ENCODE measurements at regions of chr15 and their contacts with region 1.

Region 1: DNA sequence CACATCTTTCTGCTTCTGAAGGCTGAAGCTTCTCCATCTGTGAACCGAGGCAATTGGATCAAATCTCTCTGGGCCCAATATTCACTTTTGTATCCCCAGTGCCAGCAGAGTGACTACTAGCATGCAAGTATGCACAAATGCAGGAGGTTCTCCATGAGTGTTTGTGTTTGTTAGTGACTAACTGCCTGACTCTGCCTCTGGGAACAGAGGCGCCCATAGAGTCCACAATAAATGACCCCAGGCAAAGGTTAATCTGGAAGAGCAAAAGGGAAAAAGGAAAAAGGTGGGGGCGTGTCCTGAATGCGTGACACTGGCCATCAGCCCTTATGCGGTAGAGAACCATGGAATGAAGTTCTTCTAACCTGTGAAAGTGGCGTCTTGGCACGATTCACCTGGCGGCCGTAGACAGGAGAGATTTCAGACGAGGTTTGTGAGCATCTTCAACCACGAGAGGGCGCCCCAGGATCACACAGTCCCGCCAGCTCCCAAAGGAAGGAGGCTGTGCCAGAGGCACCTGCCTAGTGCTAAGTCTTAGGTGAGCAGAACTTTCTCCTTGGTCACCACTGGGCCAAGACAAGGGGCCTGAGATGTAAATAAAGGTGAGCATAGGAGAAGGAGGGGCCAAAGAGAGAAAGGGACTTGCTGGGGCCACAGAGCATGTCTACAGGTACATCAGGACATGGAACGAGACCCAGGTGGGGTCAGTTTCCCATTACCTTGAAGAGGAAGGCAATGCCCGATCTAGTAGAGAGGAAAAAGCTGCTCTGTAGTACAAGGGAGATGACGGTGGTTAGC is 44.2 kb downstream of the RBPMS2 start:
- DNase-seq: peak; percentile 74 to 86 (median 78)
- H3K4me3 ChIP-seq: no peak overlapping the region
- H3K4me3 Mint-ChIP-seq: no peak overlapping the region
- H3K27ac ChIP-seq: no peak overlapping the region
- H3K27ac Mint-ChIP-seq: peak overlapping the region in 1 of 8 donors; percentile 64
- H3K4me1 ChIP-seq: peaks cover 7% of the 10 kb centered on the region
- H3K4me1 Mint-ChIP-seq: peaks cover 7 to 10% (median 9%) of the 10 kb centered on the region in 3 donors
- H3K27me3 ChIP-seq: no peaks in the 10 kb centered on the region
- H3K27me3 Mint-ChIP-seq: peaks cover 4 to 5% of the 10 kb centered on the region in 2 donors

Region 2: GRCh38 chr15:64430000-64430735 is 301.0 kb before region 1 on chr15:
- CTCF ChIA-PET with region 1: interaction called, 12 read pairs
- POLR2A ChIA-PET with region 1: no interaction called
- DNase-seq: peak; percentile 1 to 82 (median 72)
- H3K4me3 ChIP-seq: peak overlapping the region; percentile 38
- H3K4me3 Mint-ChIP-seq: peak overlapping the region; percentile 17 to 86 (median 79)
- H3K27ac ChIP-seq: no peak overlapping the region
- H3K27ac Mint-ChIP-seq: peak overlapping the region; percentile 76 to 97 (median 92)
- H3K4me1 ChIP-seq: peaks cover 48% of the 10 kb centered on the region
- H3K4me1 Mint-ChIP-seq: peaks cover 37 to 47% (median 40%) of the 10 kb centered on the region in 3 donors
- H3K27me3 ChIP-seq: no peaks in the 10 kb centered on the region
- H3K27me3 Mint-ChIP-seq: no peaks in the 10 kb centered on the region

Region 3: DNA sequence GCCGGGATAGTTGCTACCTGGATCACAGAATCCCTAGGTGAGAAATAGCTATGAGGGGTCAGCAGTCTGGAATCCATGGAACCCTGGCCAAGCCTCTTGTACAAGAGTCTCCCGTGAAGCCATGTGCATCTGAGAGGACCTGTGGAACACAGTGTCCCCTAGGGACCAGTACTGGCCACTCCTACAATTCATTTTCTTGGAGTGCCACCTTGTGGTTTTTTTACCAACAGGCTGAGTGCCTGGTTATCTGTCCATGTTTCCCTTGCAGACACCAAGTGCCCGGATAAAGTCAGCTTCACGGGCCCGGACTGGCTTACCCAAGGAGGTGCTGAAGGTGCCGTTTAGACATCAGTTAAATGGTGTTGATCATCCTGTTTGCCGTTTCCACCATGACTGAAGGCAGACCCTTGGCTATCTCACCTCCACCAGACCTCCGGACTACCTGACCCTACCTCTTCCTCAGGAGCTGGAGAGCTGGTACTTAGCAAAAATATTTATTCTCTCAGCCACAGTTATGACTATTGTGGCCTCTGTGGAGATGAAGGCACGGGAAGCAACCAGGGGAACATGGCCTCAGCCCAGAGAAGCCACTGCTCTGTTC is 49.7 kb before region 1 on chr15:
- CTCF ChIA-PET with region 1: interaction called, 146 read pairs
- POLR2A ChIA-PET with region 1: no interaction called
- DNase-seq: no peak
- H3K4me3 ChIP-seq: no peak overlapping the region
- H3K4me3 Mint-ChIP-seq: no peak overlapping the region
- H3K27ac ChIP-seq: no peak overlapping the region
- H3K27ac Mint-ChIP-seq: peak overlapping the region in 4 of 8 donors; percentile 37 to 68 (median 59)
- H3K4me1 ChIP-seq: no peaks in the 10 kb centered on the region
- H3K4me1 Mint-ChIP-seq: peaks cover 0 to 3% (median 0%) of the 10 kb centered on the region in 3 donors
- H3K27me3 ChIP-seq: no peaks in the 10 kb centered on the region
- H3K27me3 Mint-ChIP-seq: no peaks in the 10 kb centered on the region

Region 4: GRCh38 chr15:64717735-64718495 is 13.3 kb before region 1 on chr15:
- CTCF ChIA-PET with region 1: interaction called, 23 read pairs
- POLR2A ChIA-PET with region 1: no interaction called
- DNase-seq: peak in 1 of 5 donors; percentile 27
- H3K4me3 ChIP-seq: no peak overlapping the region
- H3K4me3 Mint-ChIP-seq: no peak overlapping the region
- H3K27ac ChIP-seq: no peak overlapping the region
- H3K27ac Mint-ChIP-seq: peak overlapping the region in 1 of 8 donors; percentile 38
- H3K4me1 ChIP-seq: peaks cover 15% of the 10 kb centered on the region
- H3K4me1 Mint-ChIP-seq: peaks cover 0 to 13% (median 0%) of the 10 kb centered on the region in 3 donors
- H3K27me3 ChIP-seq: no peaks in the 10 kb centered on the region
- H3K27me3 Mint-ChIP-seq: no peaks in the 10 kb centered on the region

Region 5: DNA sequence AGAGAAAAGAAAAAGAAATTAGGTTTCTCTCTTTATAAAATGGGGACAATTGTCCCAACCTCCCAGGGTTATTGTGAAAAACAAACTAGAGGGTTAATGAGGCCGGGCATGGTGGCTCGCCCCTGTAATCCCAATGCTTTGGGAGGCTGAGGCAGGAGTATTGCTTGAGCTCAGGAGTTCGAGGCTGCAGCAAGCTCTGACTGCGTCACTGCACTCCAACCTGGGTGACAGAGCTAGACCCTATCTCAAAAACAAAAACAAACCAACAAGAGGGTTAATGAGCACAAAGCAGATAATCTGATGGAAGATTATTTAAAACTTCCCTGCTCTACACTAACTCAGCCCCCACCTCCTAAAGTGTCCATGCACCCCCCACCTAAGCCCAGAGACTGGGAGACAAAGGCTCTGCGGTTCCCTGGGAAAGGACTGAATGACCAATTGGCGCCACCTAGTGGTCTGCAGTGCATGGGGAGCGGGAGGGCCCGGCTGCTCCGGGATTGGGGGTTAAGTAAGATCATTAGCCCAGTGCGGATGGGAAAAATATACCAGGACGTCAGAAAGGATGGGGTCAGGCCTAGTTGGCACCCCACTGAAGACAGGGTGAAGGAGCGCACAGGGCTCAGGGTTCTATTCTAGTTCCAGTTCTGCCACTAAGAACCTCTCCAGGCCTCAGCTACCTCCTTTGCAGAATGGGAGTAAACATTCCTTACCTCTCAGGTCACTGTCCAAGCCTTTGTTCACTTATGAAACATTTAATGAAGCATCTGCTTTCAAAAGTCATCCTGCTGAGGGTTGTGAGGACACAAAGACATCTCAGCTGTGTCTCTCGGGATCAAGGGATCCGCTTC is 78.7 kb after region 1 on chr15:
- CTCF ChIA-PET with region 1: interaction called, 14 read pairs
- POLR2A ChIA-PET with region 1: interaction called, 8 read pairs
- DNase-seq: peak; percentile 42 to 76 (median 56)
- H3K4me3 ChIP-seq: no peak overlapping the region
- H3K4me3 Mint-ChIP-seq: no peak overlapping the region
- H3K27ac ChIP-seq: no peak overlapping the region
- H3K27ac Mint-ChIP-seq: no peak overlapping the region
- H3K4me1 ChIP-seq: no peaks in the 10 kb centered on the region
- H3K4me1 Mint-ChIP-seq: peaks cover 3 to 6% (median 5%) of the 10 kb centered on the region in 3 donors
- H3K27me3 ChIP-seq: no peaks in the 10 kb centered on the region
- H3K27me3 Mint-ChIP-seq: peaks cover 3 to 6% of the 10 kb centered on the region in 2 donors

Region 6: GRCh38 chr15:64905119-64905831 is 174.1 kb after region 1 on chr15:
- CTCF ChIA-PET with region 1: interaction called, 115 read pairs
- POLR2A ChIA-PET with region 1: no interaction called
- DNase-seq: peak; percentile 64 to 84 (median 70)
- H3K4me3 ChIP-seq: peak overlapping the region; percentile 50
- H3K4me3 Mint-ChIP-seq: peak overlapping the region in 6 of 7 donors; percentile 28 to 71 (median 57)
- H3K27ac ChIP-seq: no peak overlapping the region
- H3K27ac Mint-ChIP-seq: peak overlapping the region in 5 of 8 donors; percentile 20 to 66 (median 57)
- H3K4me1 ChIP-seq: peaks cover 29% of the 10 kb centered on the region
- H3K4me1 Mint-ChIP-seq: peaks cover 35 to 46% (median 44%) of the 10 kb centered on the region in 3 donors
- H3K27me3 ChIP-seq: no peaks in the 10 kb centered on the region
- H3K27me3 Mint-ChIP-seq: peaks cover 0 to 2% of the 10 kb centered on the region in 2 donors